HCT116 (cell line): ENCODE measurements at regions of chr5 and their contacts with region 1.

Region 1: DNA sequence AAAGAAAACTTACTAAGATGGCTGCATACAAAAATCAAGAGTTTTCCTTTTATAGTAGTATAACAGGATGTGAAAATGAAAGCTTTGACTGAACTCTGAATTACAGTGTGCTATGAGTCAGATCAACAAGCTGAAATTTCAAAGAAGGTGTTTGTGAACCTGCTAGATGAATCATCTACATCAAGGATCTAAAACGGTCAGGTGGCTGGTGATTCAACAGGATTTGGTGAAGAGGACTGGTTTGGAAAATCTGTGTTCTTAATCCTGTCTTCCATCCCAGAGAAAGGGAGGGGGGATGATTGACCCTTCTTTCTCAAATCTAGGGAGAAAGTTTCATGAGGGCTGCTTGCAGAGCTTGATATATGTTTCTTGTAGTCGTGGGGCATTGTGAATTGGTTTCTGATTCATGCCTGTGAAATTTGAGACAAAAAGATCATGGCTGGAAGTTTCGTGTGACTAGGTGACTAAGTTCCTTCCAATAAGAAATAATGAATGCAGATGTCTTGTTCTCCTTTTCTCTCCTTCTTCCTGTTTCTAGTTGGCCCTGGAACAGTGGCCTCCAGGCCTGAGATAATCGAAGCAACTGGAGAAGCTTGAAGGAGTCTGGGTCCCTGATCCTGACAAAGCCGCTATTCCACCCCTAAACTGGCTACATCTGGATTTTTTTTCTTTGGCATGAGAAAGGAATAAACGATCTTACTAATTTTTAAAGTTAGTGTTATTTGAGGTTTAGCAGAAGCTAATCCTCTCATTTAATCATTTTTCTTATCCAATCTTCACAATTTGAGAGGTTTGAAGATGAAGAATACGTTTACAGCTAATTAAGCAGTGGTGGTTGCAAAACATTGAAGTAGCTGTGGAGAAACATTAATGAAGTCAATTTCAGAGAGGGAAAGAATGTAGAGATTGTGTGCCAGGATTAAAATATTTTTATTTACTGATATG is 67.2 kb downstream of the MRPS30 start:
- DNase-seq: peak; percentile 98
- ATAC-seq: peak; percentile 88
- H3K4me3 ChIP-seq: peak overlapping the region in 1 of 2 experiments; percentile 31; a peak in 2 of 4 replicates
- H3K27ac ChIP-seq: peak overlapping the region; percentile 97
- H3K4me1 ChIP-seq: peaks cover 26 to 41% of the 10 kb centered on the region in 2 experiments
- H3K27me3 ChIP-seq: no peaks in the 10 kb centered on the region
- CTCF ChIP-seq: no peak
- POLR2A ChIP-seq: no peak
- RAD21 ChIP-seq: peak; percentile 41

Region 2: DNA sequence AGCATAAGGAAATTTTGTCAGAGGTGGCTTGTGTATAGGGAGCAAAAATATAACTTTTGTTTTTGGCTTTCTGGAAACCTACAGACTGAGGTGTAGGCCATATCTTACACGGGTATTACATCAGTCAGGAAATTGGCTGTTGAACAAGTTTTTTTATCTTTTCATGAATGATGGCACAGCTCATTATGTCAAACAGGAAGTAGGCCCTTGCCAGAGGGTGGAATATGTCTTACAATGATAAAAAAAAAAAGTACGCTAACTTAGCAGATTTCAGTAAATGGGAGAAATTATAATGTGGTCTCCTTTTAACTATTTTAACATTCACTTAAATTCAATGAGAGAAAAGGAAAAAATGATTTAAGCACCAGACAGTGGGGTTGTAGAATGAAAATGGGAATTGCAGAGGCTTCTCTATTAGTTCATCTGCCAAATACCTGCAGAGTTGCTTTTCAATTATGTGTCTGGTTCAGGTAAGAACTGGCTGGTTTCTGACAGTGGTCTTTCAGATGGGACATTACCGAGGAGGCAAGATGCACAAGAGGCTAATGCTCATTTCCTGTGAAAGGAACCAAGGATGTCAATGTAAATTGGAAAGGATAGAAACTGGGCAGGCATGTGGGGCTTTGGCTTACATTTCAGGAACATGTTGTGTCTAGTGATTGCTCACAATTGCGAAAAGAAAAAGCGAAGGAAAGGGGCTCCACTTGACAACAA is 1103.0 kb before region 1 on chr5:
- CTCF ChIA-PET with region 1: no interaction called
- POLR2A ChIA-PET with region 1: no interaction called
- RAD21 ChIA-PET with region 1: no interaction called
- intact Hi-C with region 1: loop called (anchors 5 kb)
- DNase-seq: peak; percentile 44
- ATAC-seq: no peak; the same call in 1 of the 2 replicates
- H3K4me3 ChIP-seq: no peak overlapping the region
- H3K27ac ChIP-seq: peak overlapping the region; percentile 7; the same call in 1 of the 2 replicates
- H3K4me1 ChIP-seq: peaks cover 5 to 13% of the 10 kb centered on the region in 2 experiments; a peak in 3 of 4 replicates
- H3K27me3 ChIP-seq: no peaks in the 10 kb centered on the region
- CTCF ChIP-seq: no peak
- POLR2A ChIP-seq: no peak
- RAD21 ChIP-seq: no peak

Region 3: GRCh38 chr5:44774279-44774880 is 101.6 kb before region 1 on chr5:
- CTCF ChIA-PET with region 1: no interaction called
- POLR2A ChIA-PET with region 1: no interaction called
- RAD21 ChIA-PET with region 1: no interaction called
- intact Hi-C with region 1: no loop called
- DNase-seq: peak; percentile 38
- ATAC-seq: no peak; the same call in 1 of the 2 replicates
- H3K4me3 ChIP-seq: no peak overlapping the region
- H3K27ac ChIP-seq: no peak overlapping the region
- H3K4me1 ChIP-seq: no peaks in the 10 kb centered on the region
- H3K27me3 ChIP-seq: no peaks in the 10 kb centered on the region
- CTCF ChIP-seq: peak; percentile 35 to 66 (median 59)
- POLR2A ChIP-seq: no peak
- RAD21 ChIP-seq: peak; percentile 81

Region 4: DNA sequence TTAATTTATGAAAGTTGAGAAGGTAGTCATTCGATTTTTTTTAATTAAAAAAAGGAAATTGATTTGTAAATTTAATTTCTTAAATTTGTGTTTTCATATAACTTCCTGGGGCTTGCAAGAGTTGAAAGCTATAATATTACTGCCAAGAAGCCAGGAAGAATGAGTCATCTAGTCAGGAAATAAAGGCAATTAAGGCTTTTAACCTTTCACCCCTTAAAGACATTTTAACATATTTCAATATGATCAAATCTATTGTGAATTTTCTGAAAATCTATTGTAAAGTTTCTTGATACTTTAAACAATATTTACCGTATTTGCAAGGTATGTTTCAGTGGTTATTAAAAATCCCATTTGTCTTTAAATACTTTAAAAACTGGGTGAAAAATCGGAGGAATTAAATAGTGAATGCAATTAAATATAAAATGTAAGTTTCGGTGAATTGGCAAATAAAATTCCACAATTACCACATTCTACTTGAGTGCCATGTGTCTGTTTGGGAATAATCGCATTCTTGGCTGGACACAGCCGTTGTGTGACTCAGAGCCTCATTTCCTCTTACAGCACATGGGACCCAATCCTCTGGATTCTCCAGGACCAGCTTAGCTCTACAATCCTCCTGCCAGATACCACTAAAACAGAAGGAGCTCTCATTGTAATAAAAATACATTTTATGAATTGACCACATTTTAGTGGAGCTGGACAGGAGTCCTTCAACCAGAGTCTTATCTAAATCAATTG is 509.6 kb after region 1 on chr5:
- CTCF ChIA-PET with region 1: no interaction called
- POLR2A ChIA-PET with region 1: no interaction called
- RAD21 ChIA-PET with region 1: no interaction called
- intact Hi-C with region 1: loop called (anchors 5 kb)
- DNase-seq: peak; percentile 90
- ATAC-seq: peak; percentile 88
- H3K4me3 ChIP-seq: peak overlapping the region in 1 of 2 experiments; percentile 21; a peak in 2 of 4 replicates
- H3K27ac ChIP-seq: peak overlapping the region; percentile 95
- H3K4me1 ChIP-seq: peaks cover 34 to 43% of the 10 kb centered on the region in 2 experiments
- H3K27me3 ChIP-seq: no peaks in the 10 kb centered on the region
- CTCF ChIP-seq: no peak
- POLR2A ChIP-seq: no peak
- RAD21 ChIP-seq: peak; percentile 28